MCF 10A (cell line): ENCODE measurements at regions of chr21 and their contacts with region 1.

Region 1: GRCh38 chr21:28336314-28336713 is 656.4 kb downstream of the LTN1 start:
- DNase-seq: peak; percentile 47
- H3K4me3 Mint-ChIP-seq: no peak overlapping the region
- H3K27ac Mint-ChIP-seq: no peak overlapping the region
- H3K4me1 Mint-ChIP-seq: peaks cover 6% of the 10 kb centered on the region
- H3K27me3 Mint-ChIP-seq: no peaks in the 10 kb centered on the region
- CTCF ChIP-seq: peak; percentile 46

Region 2: GRCh38 chr21:26842976-26843932 is 1493.1 kb before region 1 on chr21:
- CTCF ChIA-PET with region 1: interaction called, 18 read pairs
- POLR2A ChIA-PET with region 1: no interaction called
- intact Hi-C with region 1: no loop called
- DNase-seq: peak; percentile 95
- H3K4me3 Mint-ChIP-seq: peak overlapping the region; percentile 76
- H3K27ac Mint-ChIP-seq: peak overlapping the region; percentile 38
- H3K4me1 Mint-ChIP-seq: peaks cover 38% of the 10 kb centered on the region
- H3K27me3 Mint-ChIP-seq: peaks cover 29% of the 10 kb centered on the region
- CTCF ChIP-seq: peak; percentile 17

Region 3: DNA sequence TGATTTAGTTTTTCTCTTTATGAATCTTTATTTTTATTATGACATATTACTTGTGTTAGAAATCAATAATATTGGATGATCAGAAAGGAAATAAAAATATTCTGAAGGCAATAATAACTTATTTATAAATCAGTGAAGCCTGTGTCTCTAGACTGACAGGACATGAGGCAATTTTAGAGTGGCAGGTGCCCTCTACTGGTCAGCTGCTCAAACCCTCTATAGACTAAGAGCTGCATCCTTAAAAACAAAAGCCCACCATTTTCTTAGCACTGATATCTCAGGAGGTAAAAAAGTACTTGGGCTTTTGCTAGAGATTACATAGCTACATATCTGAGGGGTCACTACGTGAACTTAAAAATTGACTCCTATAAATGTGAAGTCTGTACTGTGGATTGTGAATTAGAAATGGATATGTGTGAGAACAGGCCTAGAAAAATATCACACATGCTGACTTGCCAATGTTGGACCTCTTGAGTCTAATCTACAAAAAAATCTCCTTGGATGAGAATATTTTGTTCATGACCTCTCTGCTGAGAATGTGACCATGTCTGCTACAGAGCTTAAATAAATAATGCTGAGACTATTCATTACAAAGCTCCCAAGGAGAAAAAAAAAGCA is 771.5 kb before region 1 on chr21:
- CTCF ChIA-PET with region 1: interaction called, 8 read pairs
- POLR2A ChIA-PET with region 1: no interaction called
- intact Hi-C with region 1: loop called (anchors 1 kb)
- DNase-seq: peak; percentile 51
- H3K4me3 Mint-ChIP-seq: no peak overlapping the region
- H3K27ac Mint-ChIP-seq: no peak overlapping the region
- H3K4me1 Mint-ChIP-seq: peaks cover 12% of the 10 kb centered on the region
- H3K27me3 Mint-ChIP-seq: no peaks in the 10 kb centered on the region
- CTCF ChIP-seq: peak; percentile 71

Region 4: DNA sequence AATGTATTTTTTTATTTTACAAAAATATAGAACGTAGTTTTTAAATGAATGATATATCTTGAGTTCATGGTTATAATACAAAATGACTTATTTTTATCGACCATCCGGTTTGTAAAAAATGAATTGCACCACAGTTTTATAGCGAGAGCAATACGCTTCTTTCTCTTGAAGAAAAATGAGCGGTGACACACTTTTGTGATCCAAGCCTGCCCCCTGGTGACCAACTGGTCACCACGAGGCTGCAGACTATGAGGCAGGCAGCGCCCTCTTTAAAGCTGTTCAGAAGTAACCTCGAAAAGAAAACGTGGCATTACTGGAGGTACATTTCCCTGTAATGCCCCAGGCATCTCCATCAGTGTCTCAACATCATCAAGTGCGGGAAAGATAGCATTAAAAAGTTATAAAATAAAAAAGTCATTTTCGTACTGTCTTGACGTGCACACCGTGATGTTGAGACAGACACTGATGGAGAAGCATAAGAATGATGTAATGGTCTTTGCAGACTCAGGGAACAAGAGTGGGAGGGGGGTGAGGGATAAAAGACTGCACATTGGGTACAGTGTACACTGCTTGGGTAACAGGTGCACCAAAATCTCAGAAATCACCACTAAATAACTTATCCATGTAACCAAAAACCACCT is 635.2 kb before region 1 on chr21:
- CTCF ChIA-PET with region 1: interaction called, 12 read pairs
- POLR2A ChIA-PET with region 1: no interaction called
- intact Hi-C with region 1: loop called (anchors 1 kb)
- DNase-seq: peak; percentile 88
- H3K4me3 Mint-ChIP-seq: no peak overlapping the region
- H3K27ac Mint-ChIP-seq: no peak overlapping the region
- H3K4me1 Mint-ChIP-seq: no peaks in the 10 kb centered on the region
- H3K27me3 Mint-ChIP-seq: no peaks in the 10 kb centered on the region
- CTCF ChIP-seq: peak; percentile 89

Region 5: DNA sequence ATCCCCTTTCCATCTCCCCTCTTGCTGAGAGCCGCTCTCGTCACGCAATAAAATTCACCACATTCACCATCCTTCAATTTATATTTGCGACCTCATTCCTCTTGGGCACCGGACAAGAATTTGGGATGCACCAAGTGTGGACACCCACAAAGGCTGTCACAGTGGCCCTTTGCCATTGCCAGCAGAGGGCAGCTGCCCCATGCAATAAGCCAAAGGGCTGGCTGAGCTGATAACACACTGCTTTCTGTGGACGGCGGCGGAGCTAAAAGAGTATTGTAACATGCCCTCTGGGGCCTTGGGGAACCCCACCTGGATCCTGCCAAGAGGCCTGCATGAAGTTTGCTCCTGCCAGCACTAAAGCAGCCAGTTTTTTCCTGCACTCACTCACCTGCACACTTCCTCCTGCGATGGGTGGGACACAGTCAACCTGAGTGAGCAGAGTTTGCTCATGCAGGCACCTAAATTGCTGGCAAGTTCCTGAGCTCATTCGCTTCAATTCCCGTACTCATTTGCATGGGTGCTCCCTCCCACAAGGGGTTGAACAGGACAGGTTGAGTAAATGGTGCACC is 577.1 kb before region 1 on chr21:
- CTCF ChIA-PET with region 1: interaction called, 11 read pairs
- POLR2A ChIA-PET with region 1: no interaction called
- intact Hi-C with region 1: loop called (anchors 1 kb)
- DNase-seq: peak; percentile 21
- H3K4me3 Mint-ChIP-seq: no peak overlapping the region
- H3K27ac Mint-ChIP-seq: no peak overlapping the region
- H3K4me1 Mint-ChIP-seq: peaks cover 11% of the 10 kb centered on the region
- H3K27me3 Mint-ChIP-seq: no peaks in the 10 kb centered on the region
- CTCF ChIP-seq: no peak

Region 6: DNA sequence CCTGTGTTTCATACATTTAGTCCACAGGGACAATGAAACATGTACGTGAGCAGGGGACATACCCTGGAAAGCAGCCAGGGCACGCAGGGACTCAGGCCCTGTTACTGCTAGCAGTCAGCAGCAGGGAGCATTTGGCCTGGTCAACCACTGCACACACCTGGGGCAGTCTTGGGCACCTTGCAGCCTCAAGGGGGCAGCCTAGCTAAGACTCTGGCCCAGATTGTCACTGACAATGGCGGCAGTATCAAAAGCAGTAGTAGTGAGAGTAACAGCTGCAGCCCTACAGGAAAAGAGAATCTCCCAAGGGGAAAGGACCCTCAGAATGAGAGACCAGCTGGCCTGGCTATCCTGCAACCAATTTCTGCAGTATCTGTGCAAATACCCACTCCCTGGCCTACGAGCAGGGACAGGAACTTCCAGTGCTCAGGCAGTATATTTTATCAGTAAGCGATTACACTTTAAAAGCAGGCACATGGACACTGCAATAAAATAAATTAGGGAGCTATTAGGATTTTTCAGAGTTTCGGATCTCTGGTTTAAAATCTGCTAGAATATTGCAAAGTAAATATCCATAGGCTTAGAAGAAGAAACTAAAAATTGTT is 180.8 kb after region 1 on chr21:
- CTCF ChIA-PET with region 1: interaction called, 11 read pairs
- POLR2A ChIA-PET with region 1: no interaction called
- intact Hi-C with region 1: loop called (anchors 2 kb)
- DNase-seq: peak; percentile 78
- H3K4me3 Mint-ChIP-seq: no peak overlapping the region
- H3K27ac Mint-ChIP-seq: no peak overlapping the region
- H3K4me1 Mint-ChIP-seq: peaks cover 5% of the 10 kb centered on the region
- H3K27me3 Mint-ChIP-seq: no peaks in the 10 kb centered on the region
- CTCF ChIP-seq: peak; percentile 73

Region 7: GRCh38 chr21:28537371-28538079 is 201.2 kb after region 1 on chr21:
- CTCF ChIA-PET with region 1: no interaction called
- POLR2A ChIA-PET with region 1: no interaction called
- intact Hi-C with region 1: no loop called
- DNase-seq: peak; percentile 31
- H3K4me3 Mint-ChIP-seq: no peak overlapping the region
- H3K27ac Mint-ChIP-seq: no peak overlapping the region
- H3K4me1 Mint-ChIP-seq: peaks cover 26% of the 10 kb centered on the region
- H3K27me3 Mint-ChIP-seq: no peaks in the 10 kb centered on the region
- CTCF ChIP-seq: no peak